GM13977 (cell line): ENCODE measurements at regions of chr2 and their contacts with region 1.

Region 1: GRCh38 chr2:214995926-214996670 is 142.3 kb downstream of the ABCA12 start:
- DNase-seq: peak; percentile 49
- CTCF ChIP-seq: no peak

Region 2: DNA sequence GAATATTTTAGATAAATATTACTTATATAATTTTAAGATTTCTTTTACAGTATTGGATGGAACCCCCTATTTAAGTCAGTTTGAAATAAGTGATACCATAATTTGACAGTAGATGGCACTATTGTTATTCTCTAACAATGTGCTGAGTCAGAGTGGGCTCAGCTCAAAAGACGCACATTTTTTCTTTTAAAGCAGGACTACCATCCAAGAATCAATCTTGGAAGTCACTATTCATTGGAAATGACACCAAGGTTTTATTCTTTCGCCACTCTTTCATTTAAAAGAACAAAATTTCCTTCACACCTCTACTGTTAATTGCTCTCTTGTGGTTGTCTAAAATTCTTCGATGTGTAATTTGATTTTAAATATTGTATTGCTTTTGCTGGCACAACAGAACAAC is 1744.5 kb before region 1 on chr2:
- in situ Hi-C with region 1: loop called (anchors 25 kb)
- DNase-seq: peak; percentile 28
- CTCF ChIP-seq: peak; percentile 53